ENCODE measurements at regions of chr1 and their contacts with region 1.

Region 1: DNA sequence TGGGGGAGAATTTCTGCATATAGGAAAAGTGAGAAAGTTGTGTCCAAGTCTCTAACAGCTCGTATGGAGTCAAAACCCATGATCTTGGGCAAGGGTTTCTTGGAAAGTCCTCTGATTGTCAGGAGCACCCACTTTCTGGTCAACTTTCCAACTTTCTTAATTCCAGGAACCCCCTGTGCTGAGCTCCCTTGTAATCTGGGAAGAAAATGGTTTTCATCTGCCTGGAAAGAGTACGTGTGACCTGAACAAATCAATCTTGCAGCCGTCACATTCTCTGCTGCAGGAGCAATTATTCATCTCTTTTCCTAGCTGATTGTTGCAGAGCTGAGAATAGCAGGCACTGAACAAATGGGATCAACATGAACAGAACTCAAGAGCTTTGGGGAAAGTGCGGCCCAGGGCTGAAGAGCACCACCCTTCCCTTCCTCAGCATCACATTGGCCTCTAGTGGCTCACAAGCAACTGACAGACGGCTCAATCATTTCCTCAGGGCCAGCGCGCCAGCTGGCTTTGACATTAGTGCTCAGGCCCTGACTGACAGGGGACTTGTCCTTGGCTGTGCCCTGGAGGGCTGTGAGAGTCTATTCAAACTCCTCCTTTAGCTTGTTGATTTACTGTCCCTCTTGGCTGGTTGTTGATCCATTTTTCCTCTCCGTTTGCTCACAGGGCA is 295.2 kb downstream of the HLX start:
- DNase-seq: peak in 1 of 2 experiments; percentile 17
- H3K4me3 ChIP-seq: no peak overlapping the region
- H3K27ac ChIP-seq: no peak overlapping the region
- H3K4me1 ChIP-seq: peaks cover 0 to 7% (median 1%) of the 10 kb centered on the region in 4 experiments; a peak in 2 of 7 replicates
- H3K27me3 ChIP-seq: no peaks in the 10 kb centered on the region
- CTCF ChIP-seq: peak; percentile 48 to 63 (median 57)
- EP300 ChIP-seq: no peak
- POLR2A ChIP-seq: no peak
- RAD21 ChIP-seq: peak; percentile 80 to 83

Region 2: GRCh38 chr1:220908757-220909156 is 265.7 kb before region 1 on chr1:
- CTCF ChIA-PET with region 1: interaction called, 11 read pairs
- POLR2A ChIA-PET with region 1: no interaction called
- DNase-seq: no peak
- H3K4me3 ChIP-seq: no peak overlapping the region
- H3K27ac ChIP-seq: no peak overlapping the region
- H3K4me1 ChIP-seq: no peaks in the 10 kb centered on the region
- H3K27me3 ChIP-seq: no peaks in the 10 kb centered on the region
- CTCF ChIP-seq: peak in 2 of 3 experiments; percentile 12 to 20; a peak in 2 of 4 replicates
- EP300 ChIP-seq: no peak
- POLR2A ChIP-seq: no peak
- RAD21 ChIP-seq: peak; percentile 47 to 51

Region 3: GRCh38 chr1:221161571-221162041 is 12.9 kb before region 1 on chr1:
- CTCF ChIA-PET with region 1: no interaction called
- POLR2A ChIA-PET with region 1: no interaction called
- DNase-seq: no peak
- H3K4me3 ChIP-seq: no peak overlapping the region
- H3K27ac ChIP-seq: no peak overlapping the region
- H3K4me1 ChIP-seq: peaks cover 0 to 6% (median 2%) of the 10 kb centered on the region in 4 experiments; a peak in 2 of 7 replicates
- H3K27me3 ChIP-seq: no peaks in the 10 kb centered on the region
- CTCF ChIP-seq: no peak
- EP300 ChIP-seq: no peak
- POLR2A ChIP-seq: no peak
- RAD21 ChIP-seq: no peak